B cell (primary cell): ENCODE measurements at regions of chr18 and their contacts with region 1.

Region 1: DNA sequence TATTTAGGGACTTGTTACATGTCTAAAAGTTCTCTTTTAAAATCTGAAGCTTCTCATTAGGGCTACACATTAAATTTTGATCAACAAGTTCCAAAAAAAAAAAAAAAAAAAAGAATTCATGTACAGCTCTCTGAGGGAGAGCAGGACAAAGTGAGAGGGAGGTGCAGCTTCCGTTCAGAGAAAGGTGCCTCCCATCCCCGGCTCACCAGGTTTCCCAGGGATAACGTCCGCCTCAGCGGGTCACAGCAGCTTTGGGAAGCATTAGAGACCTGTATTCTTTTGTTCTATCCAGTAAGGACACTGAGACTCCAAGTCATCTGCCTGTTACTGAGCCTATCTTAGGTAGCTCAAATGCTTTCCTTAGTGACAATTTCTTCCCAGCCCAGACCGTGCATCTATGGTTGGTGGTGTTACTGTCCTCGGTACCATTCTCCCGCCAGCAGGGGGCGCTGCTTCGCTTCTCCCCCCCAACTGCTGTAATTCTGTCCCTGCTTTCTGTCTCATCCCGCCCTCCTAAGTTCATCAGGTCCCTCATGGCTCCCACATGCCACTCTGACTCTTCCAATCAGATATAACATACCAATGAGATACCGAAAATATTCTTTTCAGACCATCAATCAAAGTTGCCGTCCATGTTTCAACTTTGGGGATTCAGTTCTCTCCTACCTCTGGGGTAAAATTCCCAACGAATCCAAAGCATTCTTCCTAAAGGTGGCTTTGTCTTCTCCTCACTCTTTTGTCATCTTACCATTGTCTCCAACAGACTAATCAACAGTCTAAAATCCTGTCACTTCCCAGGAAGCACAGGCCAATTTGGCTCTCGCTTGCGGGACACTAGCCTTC is 466.5 kb downstream of the METTL4 start:
- DNase-seq: peak; percentile 44
- ATAC-seq: peak; percentile 56
- H3K4me3 ChIP-seq: no peak overlapping the region
- H3K4me3 Mint-ChIP-seq: no peak overlapping the region
- H3K27ac ChIP-seq: no peak overlapping the region
- H3K27ac Mint-ChIP-seq: no peak overlapping the region
- H3K4me1 ChIP-seq: no peaks in the 10 kb centered on the region
- H3K4me1 Mint-ChIP-seq: peaks cover 6% of the 10 kb centered on the region
- H3K27me3 ChIP-seq: no peaks in the 10 kb centered on the region
- H3K27me3 Mint-ChIP-seq: peaks cover 2% of the 10 kb centered on the region
- CTCF ChIP-seq: peak; percentile 75

Region 2: GRCh38 chr18:1917141-1917935 is 187.5 kb before region 1 on chr18:
- CTCF ChIA-PET with region 1: no interaction called
- POLR2A ChIA-PET with region 1: no interaction called
- intact Hi-C with region 1: no loop called
- DNase-seq: no peak
- ATAC-seq: no peak
- H3K4me3 ChIP-seq: no peak overlapping the region
- H3K4me3 Mint-ChIP-seq: no peak overlapping the region
- H3K27ac ChIP-seq: no peak overlapping the region
- H3K27ac Mint-ChIP-seq: no peak overlapping the region
- H3K4me1 ChIP-seq: no peaks in the 10 kb centered on the region
- H3K4me1 Mint-ChIP-seq: no peaks in the 10 kb centered on the region
- H3K27me3 ChIP-seq: no peaks in the 10 kb centered on the region
- H3K27me3 Mint-ChIP-seq: no peaks in the 10 kb centered on the region
- CTCF ChIP-seq: no peak

Region 3: DNA sequence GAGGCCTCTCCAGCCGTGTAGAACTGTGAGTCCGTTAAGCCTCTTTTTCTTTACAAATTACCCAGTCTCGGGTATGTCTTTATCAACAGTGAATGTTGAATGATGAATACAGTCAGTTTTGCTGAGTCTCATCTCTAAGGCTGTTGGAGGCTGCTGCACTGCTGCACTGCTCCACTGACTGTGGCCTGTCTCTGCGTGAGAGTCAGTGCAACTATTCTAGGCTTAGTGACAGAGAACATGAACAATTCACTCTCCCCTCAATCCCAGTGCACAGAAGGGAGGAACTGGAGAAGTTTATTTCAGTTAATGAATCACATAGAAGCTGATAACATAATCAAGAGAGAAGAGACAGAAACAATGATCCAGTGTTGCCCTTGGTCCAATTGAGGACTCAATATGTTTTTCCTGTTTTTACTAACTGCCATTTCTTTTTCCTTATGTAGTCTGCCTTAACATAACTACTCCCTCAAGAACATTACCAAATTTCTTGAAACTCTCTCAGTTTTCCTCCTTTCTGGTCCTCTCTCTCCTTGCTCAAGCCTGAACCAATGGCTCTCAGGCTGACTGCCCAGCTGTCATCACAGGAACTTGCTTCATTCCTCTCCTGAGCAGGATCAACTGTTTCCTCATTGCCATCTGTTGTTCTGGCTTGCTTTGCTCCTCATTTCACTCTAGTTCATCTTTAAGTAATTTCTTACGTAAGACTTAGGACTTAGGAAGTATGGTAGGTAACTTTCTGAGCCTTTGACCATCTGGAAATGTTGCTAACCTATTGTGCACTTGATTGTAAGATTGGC is 16.8 kb before region 1 on chr18:
- CTCF ChIA-PET with region 1: interaction called, 25 read pairs
- POLR2A ChIA-PET with region 1: no interaction called
- intact Hi-C with region 1: no loop called
- DNase-seq: no peak
- ATAC-seq: no peak
- H3K4me3 ChIP-seq: no peak overlapping the region
- H3K4me3 Mint-ChIP-seq: no peak overlapping the region
- H3K27ac ChIP-seq: no peak overlapping the region
- H3K27ac Mint-ChIP-seq: no peak overlapping the region
- H3K4me1 ChIP-seq: no peaks in the 10 kb centered on the region
- H3K4me1 Mint-ChIP-seq: no peaks in the 10 kb centered on the region
- H3K27me3 ChIP-seq: no peaks in the 10 kb centered on the region
- H3K27me3 Mint-ChIP-seq: no peaks in the 10 kb centered on the region
- CTCF ChIP-seq: no peak